ENCODE measurements at regions of chr7 and their contacts with region 1.

Region 1: DNA sequence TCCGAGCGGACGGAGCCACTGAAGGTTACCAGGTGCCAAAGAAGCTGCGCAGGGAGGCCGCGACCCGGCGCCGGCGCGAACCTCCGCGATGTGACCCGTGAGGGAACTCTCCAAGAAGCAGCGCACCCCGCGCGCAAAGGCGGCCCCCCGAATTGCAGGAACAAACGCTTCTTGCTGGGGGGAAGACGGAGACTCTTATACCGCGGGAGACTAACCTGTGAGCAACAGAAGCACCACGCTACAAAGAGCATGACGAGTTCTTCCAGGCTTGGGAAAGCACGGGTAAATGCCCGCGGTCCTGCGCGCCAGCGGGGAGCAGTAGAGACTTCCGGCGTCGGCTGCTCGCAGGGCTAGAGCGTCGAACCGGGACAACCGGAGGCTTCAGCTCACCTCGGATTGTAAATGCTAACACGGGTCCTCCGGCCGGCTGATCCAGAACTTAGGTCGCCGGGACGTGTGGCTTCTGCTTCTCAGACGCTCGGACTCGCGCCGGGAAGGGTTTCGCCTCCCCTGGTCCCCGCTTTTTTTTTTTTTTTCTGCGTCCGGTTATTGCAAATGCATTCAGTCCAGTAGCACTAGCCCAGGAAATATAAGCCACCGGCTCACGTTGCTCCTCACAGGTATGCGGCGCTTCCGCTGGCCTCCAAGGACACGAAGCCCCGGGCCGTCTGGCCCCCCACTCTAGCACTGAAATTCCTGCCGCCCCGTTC is at the start of gene COA1:
- DNase-seq: peak; percentile 42
- H3K4me3 ChIP-seq: peak within 1 kb of the TSS; percentile 72 to 96 (median 76)
- H3K27ac ChIP-seq: peak within 1 kb of the TSS; percentile 80 to 92 (median 87)
- H3K4me1 ChIP-seq: peaks cover 0 to 51% (median 5%) of the 10 kb centered on the region in 3 donors
- H3K27me3 ChIP-seq: no peaks in the 10 kb centered on the region
- CTCF ChIP-seq: peak in 1 of 6 experiments; percentile 32
- POLR2A ChIP-seq: peak in 1 of 4 donors; percentile 37
- total RNA-seq, gene COA1: 20.5 to 59.1 (median 42.3) TPM

Region 2: DNA sequence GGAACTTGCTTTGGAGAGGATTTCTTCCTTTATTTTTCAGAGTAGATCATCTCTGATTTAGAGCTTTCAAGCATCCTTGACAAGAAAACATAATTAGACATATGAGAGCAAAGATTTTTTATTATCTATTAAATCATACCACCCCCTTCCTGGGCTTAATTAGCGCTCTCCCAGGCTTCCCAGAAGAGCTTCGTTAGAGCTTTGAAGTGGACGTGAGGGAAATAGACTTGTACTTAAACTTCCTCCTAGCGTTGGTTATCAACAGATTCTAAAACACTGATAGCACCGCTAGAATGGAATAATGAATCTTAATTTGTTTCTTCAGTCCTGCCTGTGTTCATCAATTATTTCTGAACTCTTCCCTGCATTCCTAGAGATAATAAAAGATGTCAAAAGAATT is 320.4 kb before region 1 on chr7:
- intact Hi-C with region 1: no loop called
- DNase-seq: no peak
- H3K4me3 ChIP-seq: no peak overlapping the region
- H3K27ac ChIP-seq: no peak overlapping the region
- H3K4me1 ChIP-seq: no peaks in the 10 kb centered on the region
- H3K27me3 ChIP-seq: no peaks in the 10 kb centered on the region
- CTCF ChIP-seq: no peak
- POLR2A ChIP-seq: no peak

Region 3: GRCh38 chr7:43834463-43835251 is 105.3 kb after region 1 on chr7:
- intact Hi-C with region 1: loop called (anchors 10 kb)
- DNase-seq: no peak
- H3K4me3 ChIP-seq: peak overlapping the region in 2 of 4 donors; percentile 12 to 57
- H3K27ac ChIP-seq: peak overlapping the region in 1 of 4 donors; percentile 10
- H3K4me1 ChIP-seq: peaks cover 0 to 9% (median 4%) of the 10 kb centered on the region in 3 donors
- H3K27me3 ChIP-seq: peaks cover 0 to under 1% (median 0%) of the 10 kb centered on the region in 4 donors
- CTCF ChIP-seq: no peak
- POLR2A ChIP-seq: no peak

Region 4: GRCh38 chr7:44072364-44073231 is 343.2 kb after region 1 on chr7:
- intact Hi-C with region 1: no loop called
- DNase-seq: no peak
- H3K4me3 ChIP-seq: peak overlapping the region in 1 of 4 donors; percentile 41
- H3K27ac ChIP-seq: peak overlapping the region; percentile 76 to 88 (median 86)
- H3K4me1 ChIP-seq: peaks cover 35 to 77% (median 40%) of the 10 kb centered on the region in 3 donors
- H3K27me3 ChIP-seq: no peaks in the 10 kb centered on the region
- CTCF ChIP-seq: peak in 5 of 6 experiments; percentile 41 to 78 (median 61)
- POLR2A ChIP-seq: no peak

Measured in esophagus squamous epithelium (tissue), 5 donors.